Naive thymus-derived CD4-positive, alpha-beta T cell (primary cell): ENCODE measurements at regions of chr18 and their contacts with region 1.

Region 1: DNA sequence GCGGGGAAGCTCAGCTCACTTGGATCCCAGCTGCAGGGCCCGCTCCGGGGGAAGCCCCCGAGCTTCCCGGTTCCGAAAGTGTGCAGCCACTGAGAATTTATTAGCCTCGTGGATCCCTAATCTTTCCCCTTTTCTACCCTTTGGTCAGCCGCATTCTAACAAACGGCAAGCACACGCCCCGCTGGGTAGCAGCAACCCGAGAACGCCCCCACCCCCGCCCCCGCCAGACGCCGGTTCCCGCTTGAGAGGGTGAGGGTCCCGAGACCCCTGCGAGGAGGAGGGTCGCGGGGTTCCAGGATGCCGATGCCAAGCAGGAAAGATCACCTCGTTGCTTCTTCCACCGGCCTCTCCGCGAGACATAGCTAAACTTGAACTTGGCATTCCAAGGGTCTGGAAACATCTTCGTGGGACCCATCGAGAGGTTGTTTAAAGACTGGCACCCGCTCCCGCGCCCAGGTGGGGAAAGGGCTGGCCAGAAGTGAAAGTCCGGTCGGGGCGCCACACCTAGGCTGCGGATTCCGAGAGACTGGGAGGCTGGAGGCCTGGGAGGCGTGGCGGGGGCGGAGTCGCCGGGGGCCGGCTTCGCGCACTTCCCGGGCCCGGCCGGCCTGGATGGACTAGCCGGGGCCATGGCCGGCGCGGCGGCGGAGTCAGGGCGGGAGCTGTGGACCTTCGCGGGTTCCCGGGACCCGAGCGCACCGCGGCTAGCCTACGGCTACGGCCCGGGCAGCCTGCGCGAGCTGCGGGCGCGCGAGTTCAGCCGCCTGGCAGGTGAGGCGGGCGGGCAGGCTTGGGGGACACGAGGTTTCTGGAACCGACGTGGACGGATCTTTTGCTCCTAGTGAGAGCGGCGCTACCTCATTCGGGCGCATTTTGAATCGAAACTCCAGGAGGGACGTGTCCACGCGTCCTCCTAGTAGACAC is at the start of gene MOCOS:
- DNase-seq: peak in 6 of 9 donors; percentile 16 to 71 (median 22)
- ATAC-seq: peak; percentile 76
- H3K4me3 ChIP-seq: peak within 1 kb of the TSS; percentile 77
- H3K4me3 Mint-ChIP-seq: peak within 1 kb of the TSS; percentile 74 to 87 (median 83)
- H3K27ac ChIP-seq: peak within 1 kb of the TSS; percentile 46
- H3K27ac Mint-ChIP-seq: peak within 1 kb of the TSS in 1 of 9 donors; percentile 38
- H3K4me1 ChIP-seq: peaks cover 4 to 5% of the 10 kb centered on the region in 2 donors
- H3K4me1 Mint-ChIP-seq: peaks cover 7 to 25% (median 11%) of the 10 kb centered on the region in 7 donors
- H3K27me3 ChIP-seq: peaks cover 0 to 3% of the 10 kb centered on the region in 2 donors
- H3K27me3 Mint-ChIP-seq: peaks cover 20 to 35% (median 24%) of the 10 kb centered on the region in 5 donors
- total RNA-seq, gene MOCOS: 0.05 TPM in 1 of 5 experiments, not detected in the others

Region 2: GRCh38 chr18:36284671-36285295 is 97.6 kb after region 1 on chr18:
- CTCF ChIA-PET with region 1: no interaction called
- POLR2A ChIA-PET with region 1: no interaction called
- intact Hi-C with region 1: loop called in 1 of 2 experiments (anchors 5 kb)
- DNase-seq: peak in 7 of 9 donors; percentile 20 to 61 (median 54)
- ATAC-seq: peak; percentile 67
- H3K4me3 ChIP-seq: no peak overlapping the region
- H3K4me3 Mint-ChIP-seq: no peak overlapping the region
- H3K27ac ChIP-seq: no peak overlapping the region
- H3K27ac Mint-ChIP-seq: no peak overlapping the region
- H3K4me1 ChIP-seq: no peaks in the 10 kb centered on the region
- H3K4me1 Mint-ChIP-seq: peaks cover 0 to 4% (median 0%) of the 10 kb centered on the region in 7 donors
- H3K27me3 ChIP-seq: no peaks in the 10 kb centered on the region
- H3K27me3 Mint-ChIP-seq: peaks cover 30 to 59% (median 33%) of the 10 kb centered on the region in 5 donors

Region 3: DNA sequence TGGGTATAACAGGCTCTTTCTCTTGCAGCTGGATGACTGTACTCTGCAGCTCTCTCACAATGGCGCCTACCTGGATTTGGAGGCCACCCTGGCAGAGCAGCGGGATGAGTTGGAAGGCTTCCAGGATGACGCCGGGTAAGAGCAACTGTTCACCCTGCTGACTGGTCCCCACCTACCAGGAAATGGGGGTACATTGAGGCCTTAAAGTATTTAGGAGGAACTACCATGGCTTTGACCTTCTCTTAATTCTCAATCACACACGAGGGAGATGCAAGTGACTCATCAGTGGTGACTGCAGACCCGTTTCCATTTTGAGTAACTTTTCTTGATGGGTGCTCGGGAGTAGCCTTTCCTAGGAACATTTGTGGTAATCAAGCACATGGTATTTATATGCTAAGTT is 168.3 kb after region 1 on chr18:
- CTCF ChIA-PET with region 1: no interaction called
- POLR2A ChIA-PET with region 1: no interaction called
- intact Hi-C with region 1: no loop called
- DNase-seq: no peak
- ATAC-seq: no peak
- H3K4me3 ChIP-seq: no peak overlapping the region
- H3K4me3 Mint-ChIP-seq: no peak overlapping the region
- H3K27ac ChIP-seq: no peak overlapping the region
- H3K27ac Mint-ChIP-seq: peak overlapping the region in 1 of 9 donors; percentile 52
- H3K4me1 ChIP-seq: no peaks in the 10 kb centered on the region
- H3K4me1 Mint-ChIP-seq: no peaks in the 10 kb centered on the region
- H3K27me3 ChIP-seq: no peaks in the 10 kb centered on the region
- H3K27me3 Mint-ChIP-seq: peaks cover 4 to 39% (median 21%) of the 10 kb centered on the region in 5 donors